ENCODE measurements at regions of chr4 and their contacts with region 1.

Region 1: DNA sequence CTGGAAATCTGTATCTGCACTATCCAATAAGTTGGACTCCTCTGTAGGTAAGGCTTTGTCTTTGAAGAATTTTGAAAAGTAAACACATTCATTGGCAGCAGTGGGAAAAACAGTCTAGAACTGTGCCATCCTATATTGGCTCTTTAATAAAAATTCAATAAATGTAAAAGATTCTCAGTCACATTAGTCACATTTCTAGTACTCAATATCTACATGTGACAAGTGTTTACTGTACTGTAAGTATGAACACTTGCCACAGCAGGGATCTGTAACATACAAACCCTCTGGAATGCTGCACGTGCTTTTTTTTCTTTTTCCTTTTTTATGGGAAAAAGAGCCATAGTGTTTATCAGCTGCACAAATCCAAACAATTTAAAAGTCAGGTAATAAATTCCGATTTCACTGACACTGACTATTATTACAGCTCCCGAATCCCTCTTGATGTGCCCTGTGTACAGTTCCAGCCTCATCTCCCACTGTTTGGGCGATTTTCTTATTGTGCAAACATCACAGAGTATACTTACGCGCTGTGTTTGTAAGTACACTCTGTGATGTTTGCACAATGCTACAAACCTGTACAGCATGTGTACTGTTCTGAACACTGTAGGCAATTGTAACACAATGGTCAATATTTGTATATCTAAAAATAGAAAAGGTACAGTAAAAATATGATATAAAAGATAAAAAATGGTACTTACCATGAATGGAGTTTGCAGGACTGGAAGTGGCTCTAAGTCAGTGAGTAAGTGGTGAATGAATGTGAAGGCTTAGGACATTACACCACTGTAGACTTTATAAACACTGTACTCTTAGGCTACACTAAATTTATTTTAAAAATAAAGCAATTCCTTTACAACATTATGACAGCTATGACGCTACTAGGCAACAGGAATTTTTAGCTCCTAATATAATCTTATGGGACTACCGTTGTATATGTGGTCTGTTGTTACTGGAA is 8.7 kb downstream of the PYURF start:
- DNase-seq: no peak
- H3K4me3 Mint-ChIP-seq: no peak overlapping the region
- H3K27ac Mint-ChIP-seq: no peak overlapping the region
- H3K4me1 Mint-ChIP-seq: no peaks in the 10 kb centered on the region
- H3K27me3 Mint-ChIP-seq: no peaks in the 10 kb centered on the region

Region 2: GRCh38 chr4:88033309-88033708 is 481.5 kb before region 1 on chr4:
- CTCF ChIA-PET with region 1: no interaction called
- intact Hi-C with region 1: loop called (anchors 1 kb)
- DNase-seq: peak; percentile 54
- H3K4me3 Mint-ChIP-seq: no peak overlapping the region
- H3K27ac Mint-ChIP-seq: no peak overlapping the region
- H3K4me1 Mint-ChIP-seq: no peaks in the 10 kb centered on the region
- H3K27me3 Mint-ChIP-seq: no peaks in the 10 kb centered on the region

Region 3: DNA sequence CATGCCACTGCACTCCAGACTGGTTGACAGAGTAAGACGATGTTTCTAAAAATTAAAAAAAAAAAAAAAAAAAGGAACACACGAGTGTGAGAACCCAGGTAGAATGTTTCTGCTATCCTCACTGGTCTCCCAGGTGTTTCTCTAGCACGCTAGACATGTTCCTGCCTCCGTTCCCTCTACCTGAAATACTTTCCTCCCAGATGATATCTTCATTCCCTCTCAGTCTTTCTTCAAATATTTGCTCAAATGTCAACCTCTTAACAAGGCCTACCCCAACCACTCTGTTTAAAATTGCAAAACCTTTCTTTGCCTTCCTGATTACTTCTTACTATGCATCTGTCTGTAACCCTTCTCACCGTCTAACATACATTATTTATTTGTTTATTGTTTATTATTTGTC is 296.9 kb before region 1 on chr4:
- CTCF ChIA-PET with region 1: interaction called, 44 read pairs
- intact Hi-C with region 1: loop called (anchors 1 kb)
- DNase-seq: no peak
- H3K4me3 Mint-ChIP-seq: no peak overlapping the region
- H3K27ac Mint-ChIP-seq: no peak overlapping the region
- H3K4me1 Mint-ChIP-seq: peaks cover 3% of the 10 kb centered on the region
- H3K27me3 Mint-ChIP-seq: no peaks in the 10 kb centered on the region

Region 4: GRCh38 chr4:88369936-88370335 is 144.9 kb before region 1 on chr4:
- CTCF ChIA-PET with region 1: interaction called, 24 read pairs
- intact Hi-C with region 1: loop called (anchors 1 kb)
- DNase-seq: no peak
- H3K4me3 Mint-ChIP-seq: no peak overlapping the region
- H3K27ac Mint-ChIP-seq: no peak overlapping the region
- H3K4me1 Mint-ChIP-seq: no peaks in the 10 kb centered on the region
- H3K27me3 Mint-ChIP-seq: no peaks in the 10 kb centered on the region

Region 5: GRCh38 chr4:88456757-88457306 is 58.0 kb before region 1 on chr4 and contains the start of gene HERC5:
- CTCF ChIA-PET with region 1: interaction called, 11 read pairs
- intact Hi-C with region 1: loop called (anchors 2 kb)
- DNase-seq: peak; percentile 93
- H3K4me3 Mint-ChIP-seq: peak within 1 kb of the TSS; percentile 98
- H3K27ac Mint-ChIP-seq: peak within 1 kb of the TSS; percentile 97
- H3K4me1 Mint-ChIP-seq: peaks cover 5% of the 10 kb centered on the region
- H3K27me3 Mint-ChIP-seq: no peaks in the 10 kb centered on the region
- total RNA-seq, gene HERC5: 38.8 to 39.5 TPM

Region 6: DNA sequence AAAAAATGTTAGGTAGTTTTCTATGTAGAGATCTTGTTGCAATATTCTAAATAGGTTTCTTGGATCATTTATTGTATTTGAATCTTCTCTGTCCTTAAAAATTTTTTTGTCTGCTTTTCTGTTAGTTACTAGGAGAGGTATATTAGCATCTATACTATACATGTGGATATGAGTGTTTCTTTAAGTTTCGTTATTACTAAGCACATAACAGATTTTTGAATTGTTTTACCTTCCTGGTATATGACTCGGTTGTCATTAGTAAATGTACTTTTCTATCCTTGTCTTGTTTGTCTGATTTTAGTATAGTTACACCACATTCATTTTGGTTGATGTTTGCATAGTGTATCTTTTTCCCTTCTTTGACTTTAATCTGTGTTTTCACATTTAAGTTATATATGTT is 11.5 kb before region 1 on chr4:
- CTCF ChIA-PET with region 1: interaction called, 23 read pairs
- intact Hi-C with region 1: no loop called
- DNase-seq: no peak
- H3K4me3 Mint-ChIP-seq: no peak overlapping the region
- H3K27ac Mint-ChIP-seq: no peak overlapping the region
- H3K4me1 Mint-ChIP-seq: peaks cover 4% of the 10 kb centered on the region
- H3K27me3 Mint-ChIP-seq: no peaks in the 10 kb centered on the region

Measured in activated naive CD4-positive, alpha-beta T cell treated with anti-CD3 and anti-CD28 coated beads for 36 hours (primary cell).